ENCODE measurements at regions of chr12 and their contacts with region 1.

Region 1: GRCh38 chr12:6195665-6196535 is 4.3 kb upstream of the CD9 start:
- DNase-seq: peak; percentile 83 to 88
- ATAC-seq: peak; percentile 58

Region 2: GRCh38 chr12:5059358-5059757 is 1136.5 kb before region 1 on chr12:
- intact Hi-C with region 1: no loop called
- DNase-seq: no peak
- ATAC-seq: no peak

Region 3: DNA sequence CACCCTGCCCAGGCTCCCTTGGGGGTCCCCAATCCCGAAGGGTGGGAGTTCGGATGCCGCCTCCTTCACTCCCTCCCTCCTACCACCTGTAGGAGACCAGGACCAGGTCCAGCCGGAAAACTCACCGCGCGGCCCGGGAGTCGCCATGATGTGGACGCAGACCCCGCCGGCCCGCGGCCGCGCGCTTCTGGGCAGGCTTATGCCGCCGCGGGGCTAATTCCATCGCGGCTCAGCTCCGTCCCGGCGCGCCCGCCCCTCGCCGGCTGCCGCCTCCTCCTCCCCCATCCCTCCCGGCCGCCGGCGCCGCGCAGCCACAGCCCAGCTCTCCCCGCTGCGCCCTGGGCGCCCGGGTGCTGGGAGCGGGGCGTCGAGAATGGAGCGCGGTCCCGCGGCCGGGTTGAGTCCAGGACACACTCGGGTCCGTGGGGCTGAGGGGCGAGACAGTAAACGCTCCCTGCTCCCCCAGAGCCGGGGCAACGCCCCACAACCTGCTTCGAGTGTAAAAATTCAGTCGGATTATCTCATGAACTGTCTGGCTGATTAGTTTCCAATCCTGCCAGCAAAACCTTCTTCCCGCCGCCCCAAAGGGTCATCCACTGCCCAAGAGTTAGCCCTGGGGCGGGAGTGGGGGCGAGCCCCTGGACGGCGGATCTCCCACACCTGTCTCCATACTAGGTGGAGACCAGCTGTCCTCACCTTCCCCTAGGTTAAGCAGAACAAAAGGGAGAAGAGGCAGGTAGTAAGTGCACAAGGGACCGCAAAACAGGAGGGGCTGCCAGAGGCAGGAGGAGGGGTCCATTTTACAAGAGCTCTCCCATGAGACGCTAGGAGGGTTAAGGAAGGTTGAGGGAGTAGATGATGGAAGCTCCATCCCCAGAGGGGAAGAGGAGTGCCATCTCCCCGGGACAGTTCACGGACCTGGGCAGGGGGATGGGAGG is 250.6 kb before region 1 on chr12 and contains the start of gene ANO2:
- intact Hi-C with region 1: no loop called
- DNase-seq: no peak
- ATAC-seq: peak; percentile 46
- total RNA-seq, gene ANO2: 1.8 to 2.6 TPM

Region 4: GRCh38 chr12:6167327-6168259 is 28.3 kb before region 1 on chr12:
- intact Hi-C with region 1: no loop called
- DNase-seq: peak; percentile 28 to 37
- ATAC-seq: peak; percentile 44

Region 5: DNA sequence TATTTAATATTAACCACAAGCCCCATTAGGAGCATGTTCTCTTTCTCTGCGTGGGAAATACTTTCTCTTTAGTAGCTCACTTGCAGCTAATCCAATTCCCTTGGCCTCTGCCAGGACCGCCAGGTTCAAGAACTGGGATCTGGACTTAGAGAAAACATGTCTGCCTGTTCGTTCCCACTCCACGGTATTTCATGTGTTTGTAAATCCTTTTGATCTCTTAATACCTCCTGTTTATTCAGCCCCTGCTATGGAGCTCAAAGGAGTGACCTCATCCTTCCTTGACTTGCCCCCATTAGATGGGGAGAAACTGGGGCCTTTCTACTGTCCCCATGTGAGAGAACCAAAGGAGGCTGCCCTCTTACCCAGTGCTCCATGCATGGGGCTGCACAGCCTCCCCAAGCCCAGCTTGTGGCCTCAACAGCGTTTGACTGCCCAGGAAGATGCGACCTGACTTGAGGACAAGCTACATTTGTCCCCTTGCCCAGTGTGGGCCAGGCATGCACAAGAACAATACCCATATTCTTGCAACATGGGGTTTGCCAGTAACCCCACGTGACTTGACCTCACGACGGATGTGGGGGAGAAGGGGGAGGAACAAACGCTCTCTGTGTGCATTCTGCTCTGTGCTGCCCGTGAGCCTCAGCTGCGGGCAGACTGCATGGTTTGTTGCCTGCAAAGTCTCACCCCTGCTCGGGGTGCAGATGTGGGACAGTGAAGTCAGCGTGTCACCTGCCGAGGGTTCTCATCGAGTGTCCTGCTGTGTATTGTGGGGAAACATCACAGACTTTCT is 34.6 kb after region 1 on chr12:
- intact Hi-C with region 1: loop called in 1 of 2 experiments (anchors 5 kb)
- DNase-seq: peak; percentile 64 to 80
- ATAC-seq: no peak

Region 6: DNA sequence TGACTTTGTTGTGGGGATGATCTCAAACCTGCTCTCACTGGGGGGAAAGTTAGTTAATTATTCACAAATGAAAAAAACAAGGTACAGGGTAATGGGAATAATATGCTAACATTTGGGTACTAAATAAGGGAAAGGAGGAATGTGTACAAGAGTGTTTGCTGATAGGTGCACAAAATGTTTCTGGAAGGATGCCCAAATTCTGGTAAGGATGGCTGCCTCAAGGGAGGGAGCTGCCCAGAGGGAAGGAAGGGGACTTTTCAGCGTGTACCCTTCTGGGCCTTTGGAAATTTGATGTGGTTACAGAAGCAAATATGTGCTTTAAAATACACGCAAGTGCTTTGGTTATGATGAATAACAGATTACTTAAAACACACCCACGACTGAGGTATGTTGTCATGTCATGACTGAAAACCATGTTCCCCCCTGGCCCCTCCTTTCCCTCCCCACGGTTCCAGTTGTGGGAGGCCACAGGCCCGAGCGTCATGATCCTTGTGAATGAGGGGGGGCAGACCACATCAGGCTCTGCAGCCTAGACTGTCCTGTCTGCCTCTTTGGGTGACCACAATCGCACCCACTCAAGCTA is 71.3 kb after region 1 on chr12:
- intact Hi-C with region 1: loop called in 1 of 2 experiments (anchors 10 kb)
- DNase-seq: no peak
- ATAC-seq: no peak

Region 7: GRCh38 chr12:6278439-6279255 is 82.7 kb after region 1 on chr12:
- intact Hi-C with region 1: loop called in 1 of 2 experiments (anchors 5 kb)
- DNase-seq: peak; percentile 91
- ATAC-seq: peak; percentile 86

Measured in left colon (tissue), 2 donors.